H1 (cell line): ENCODE measurements at regions of chr2 and their contacts with region 1.

Region 1: GRCh38 chr2:175203621-175204496 is 22.3 kb upstream of the ATP5MC3 start:
- DNase-seq: peak in 1 of 2 experiments; percentile 67
- H3K4me3 ChIP-seq: no peak overlapping the region
- H3K27ac ChIP-seq: no peak overlapping the region
- H3K4me1 ChIP-seq: no peaks in the 10 kb centered on the region
- H3K27me3 ChIP-seq: no peaks in the 10 kb centered on the region; a peak in 1 of 7 replicates
- CTCF ChIP-seq: peak; percentile 59 to 75 (median 73)
- EP300 ChIP-seq: no peak
- POLR2A ChIP-seq: no peak
- RAD21 ChIP-seq: peak; percentile 70 to 83

Region 2: DNA sequence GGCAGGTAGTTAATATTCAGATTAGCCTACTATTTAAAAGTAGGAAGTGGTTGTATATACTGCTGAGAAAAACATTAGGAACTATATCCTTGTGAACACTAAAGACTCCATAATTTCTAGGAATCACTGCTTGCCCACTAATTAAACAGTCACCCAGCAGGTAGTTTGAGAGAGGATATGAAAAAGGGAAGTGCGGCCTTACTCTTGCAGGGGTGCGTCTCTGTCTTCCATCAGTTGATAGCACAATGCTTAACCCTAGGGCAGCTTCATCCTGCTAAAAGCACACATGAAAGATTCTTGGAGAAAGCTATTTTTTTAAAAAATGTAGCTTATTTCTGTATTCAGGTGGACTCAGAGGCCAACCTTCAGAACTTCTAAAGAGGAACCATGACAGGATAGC is 30.8 kb after region 1 on chr2:
- CTCF ChIA-PET with region 1: no interaction called
- POLR2A ChIA-PET with region 1: no interaction called
- DNase-seq: no peak
- H3K4me3 ChIP-seq: no peak overlapping the region
- H3K27ac ChIP-seq: no peak overlapping the region
- H3K4me1 ChIP-seq: no peaks in the 10 kb centered on the region
- H3K27me3 ChIP-seq: no peaks in the 10 kb centered on the region
- CTCF ChIP-seq: no peak
- EP300 ChIP-seq: no peak
- POLR2A ChIP-seq: no peak
- RAD21 ChIP-seq: no peak

Region 3: DNA sequence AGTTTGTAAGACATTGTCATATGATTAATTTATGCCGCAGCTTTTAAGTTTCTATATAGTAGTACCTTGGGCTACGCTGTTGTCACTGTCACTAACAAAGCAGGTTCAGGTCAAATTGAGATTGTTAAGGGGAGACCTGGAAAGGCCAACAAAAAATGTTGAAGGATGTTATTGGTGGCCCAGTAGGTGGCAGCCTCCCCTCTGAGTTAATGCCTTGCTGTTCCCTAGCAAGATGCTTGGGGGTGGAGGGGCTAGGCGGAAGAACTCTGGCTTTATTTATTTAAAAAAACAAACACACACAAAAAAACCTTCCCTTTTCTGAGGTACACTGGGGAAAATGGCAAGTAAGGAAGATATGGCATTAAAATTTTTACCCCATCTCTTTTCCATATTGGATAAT is 105.9 kb after region 1 on chr2:
- CTCF ChIA-PET with region 1: interaction called, 11 read pairs
- POLR2A ChIA-PET with region 1: no interaction called
- DNase-seq: peak; percentile 23 to 54
- H3K4me3 ChIP-seq: no peak overlapping the region
- H3K27ac ChIP-seq: no peak overlapping the region
- H3K4me1 ChIP-seq: no peaks in the 10 kb centered on the region
- H3K27me3 ChIP-seq: no peaks in the 10 kb centered on the region
- CTCF ChIP-seq: peak; percentile 32 to 52 (median 52)
- EP300 ChIP-seq: no peak
- POLR2A ChIP-seq: no peak
- RAD21 ChIP-seq: peak; percentile 58 to 73

Region 4: DNA sequence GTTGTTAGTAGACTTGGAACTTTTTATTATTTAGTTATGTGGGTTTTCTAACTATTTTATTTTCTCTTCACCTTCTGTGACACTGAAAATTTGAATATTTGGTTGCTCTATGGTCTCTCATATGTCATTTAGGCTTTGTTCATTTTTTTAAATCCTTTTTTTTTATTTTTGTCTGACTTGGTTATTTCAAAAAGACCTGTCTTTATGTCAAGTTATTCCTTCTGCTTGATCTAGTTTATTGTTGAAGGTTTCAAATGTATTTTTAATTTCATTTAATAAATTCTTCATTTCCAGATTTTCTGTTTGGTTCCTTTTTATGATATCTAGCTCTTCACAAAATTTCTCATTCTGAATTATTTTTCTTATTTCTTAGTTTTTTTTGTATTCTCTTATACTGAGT is 138.2 kb after region 1 on chr2:
- CTCF ChIA-PET with region 1: no interaction called
- POLR2A ChIA-PET with region 1: no interaction called
- DNase-seq: no peak
- H3K4me3 ChIP-seq: no peak overlapping the region
- H3K27ac ChIP-seq: no peak overlapping the region
- H3K4me1 ChIP-seq: no peaks in the 10 kb centered on the region
- H3K27me3 ChIP-seq: no peaks in the 10 kb centered on the region
- CTCF ChIP-seq: no peak
- EP300 ChIP-seq: no peak
- POLR2A ChIP-seq: no peak
- RAD21 ChIP-seq: no peak